OCI-LY7 (cell line): ENCODE measurements at regions of chr20 and their contacts with region 1.

Region 1: DNA sequence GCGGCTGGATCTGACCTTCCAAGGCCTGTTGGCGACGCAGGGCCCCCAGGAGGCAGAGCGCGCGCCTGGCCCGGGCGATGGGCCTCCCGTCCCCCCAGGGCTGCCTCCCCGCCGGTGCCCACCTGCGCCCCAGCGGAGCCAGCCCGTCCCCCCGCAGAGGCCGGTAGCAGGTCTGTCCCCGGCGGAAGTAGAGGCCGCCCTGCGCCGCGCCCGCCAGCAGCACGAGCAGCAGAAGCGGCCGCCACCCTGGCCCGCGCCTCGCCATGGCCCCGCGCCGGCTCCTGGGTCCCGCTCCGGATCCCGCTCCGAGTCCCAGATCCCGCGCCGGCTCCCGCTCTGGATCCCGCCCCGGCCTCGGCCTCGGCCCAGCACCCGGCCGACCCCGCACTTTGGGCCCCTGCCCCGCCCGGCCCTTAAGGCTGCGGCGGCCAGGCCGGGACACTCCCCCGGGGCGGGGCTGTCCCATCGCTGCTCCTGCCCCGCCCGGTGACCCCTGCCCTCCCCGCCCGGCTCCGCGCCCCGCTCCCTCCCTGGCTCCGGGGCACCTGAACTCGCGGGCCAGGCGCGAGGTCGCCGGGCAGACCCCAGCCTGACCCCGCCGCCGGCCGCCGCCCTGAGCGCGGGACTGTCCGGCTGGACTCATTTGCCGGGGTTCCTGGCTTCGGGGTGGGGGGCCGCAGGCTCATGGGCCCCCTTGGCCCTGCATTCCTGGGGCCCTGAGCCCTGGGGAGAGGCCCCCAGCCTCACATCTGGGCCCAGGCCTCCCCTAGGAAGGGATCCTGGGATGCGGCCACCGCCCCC is at the start of gene CTSZ:
- DNase-seq: peak; percentile 53
- H3K4me3 ChIP-seq: peak within 1 kb of the TSS; percentile 74
- H3K27ac ChIP-seq: peak within 1 kb of the TSS; percentile 85
- H3K4me1 ChIP-seq: peaks cover 70% of the 10 kb centered on the region
- CTCF ChIP-seq: no peak
- total RNA-seq, gene CTSZ: 47.2 and 50.5 TPM in 2 replicates

Region 2: GRCh38 chr20:58650776-58651558 is 356.1 kb before region 1 on chr20 and contains the start of gene STX16:
- CTCF ChIA-PET with region 1: no interaction called
- POLR2A ChIA-PET with region 1: no interaction called
- intact Hi-C with region 1: loop called (anchors 2 kb)
- DNase-seq: peak; percentile 94
- H3K4me3 ChIP-seq: peak within 1 kb of the TSS; percentile 98
- H3K27ac ChIP-seq: peak within 1 kb of the TSS; percentile 74
- H3K4me1 ChIP-seq: peaks cover 42% of the 10 kb centered on the region
- CTCF ChIP-seq: peak; percentile 88
- total RNA-seq, gene STX16: 48.2 and 50.5 TPM in 2 replicates

Region 3: GRCh38 chr20:58890518-58891085 is 116.5 kb before region 1 on chr20:
- CTCF ChIA-PET with region 1: no interaction called
- POLR2A ChIA-PET with region 1: no interaction called
- intact Hi-C with region 1: loop called (anchors 1 kb)
- DNase-seq: peak; percentile 85
- H3K4me3 ChIP-seq: peak overlapping the region; percentile 90
- H3K27ac ChIP-seq: peak overlapping the region; percentile 84
- H3K4me1 ChIP-seq: peaks cover 58% of the 10 kb centered on the region
- CTCF ChIP-seq: no peak

Region 4: DNA sequence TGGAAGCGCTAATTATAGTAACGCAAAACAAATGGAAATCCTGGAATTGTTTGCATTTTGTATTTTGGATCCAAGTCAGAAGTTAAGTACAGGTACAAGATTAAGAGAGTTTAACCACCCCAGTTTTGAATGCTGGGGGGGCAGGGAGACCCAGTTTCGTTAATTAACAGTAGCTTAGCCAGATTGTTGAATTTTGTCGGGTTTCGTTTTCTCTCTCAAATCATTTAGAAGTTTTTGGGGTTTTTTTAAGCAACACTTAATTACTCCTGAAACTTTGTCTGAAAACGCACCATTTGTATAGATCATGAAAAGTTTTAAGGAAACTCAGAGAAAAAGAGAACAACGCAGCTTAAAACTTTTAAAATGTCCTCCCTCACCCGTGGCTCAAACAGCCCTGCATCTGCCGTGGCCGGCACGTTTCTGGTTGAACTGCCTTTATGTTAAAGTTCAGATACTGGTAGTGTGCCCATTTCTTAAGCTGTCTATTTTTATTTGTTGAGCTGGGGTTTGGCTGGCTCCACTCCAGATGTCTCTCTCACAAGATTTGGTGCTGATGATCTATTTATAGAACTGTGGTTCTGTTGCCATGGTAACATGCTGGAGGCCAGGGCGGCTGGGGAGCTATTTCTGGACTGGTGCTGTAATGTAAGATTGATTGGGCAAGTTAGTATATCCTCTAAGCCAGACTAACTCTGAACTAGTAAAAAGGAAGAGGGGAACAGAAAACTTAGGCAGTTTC is 99.5 kb before region 1 on chr20:
- CTCF ChIA-PET with region 1: no interaction called
- POLR2A ChIA-PET with region 1: interaction called, 4 read pairs
- intact Hi-C with region 1: loop called (anchors 1 kb)
- DNase-seq: peak; percentile 98
- H3K4me3 ChIP-seq: peak overlapping the region; percentile 60
- H3K27ac ChIP-seq: peak overlapping the region; percentile 98
- H3K4me1 ChIP-seq: peaks cover 40% of the 10 kb centered on the region
- CTCF ChIP-seq: no peak

Region 5: GRCh38 chr20:59032023-59032712 is 25.1 kb after region 1 on chr20 and contains the start of gene ATP5F1E:
- CTCF ChIA-PET with region 1: interaction called, 3 read pairs
- POLR2A ChIA-PET with region 1: interaction called, 13 read pairs
- intact Hi-C with region 1: loop called (anchors 1 kb)
- DNase-seq: peak; percentile 97
- H3K4me3 ChIP-seq: peak within 1 kb of the TSS; percentile 76
- H3K27ac ChIP-seq: peak within 1 kb of the TSS; percentile 72
- H3K4me1 ChIP-seq: peaks cover 49% of the 10 kb centered on the region
- CTCF ChIP-seq: no peak
- total RNA-seq, gene ATP5F1E: 36.7 and 42.4 TPM in 2 replicates

Region 6: GRCh38 chr20:59159493-59160376 is 152.7 kb after region 1 on chr20:
- CTCF ChIA-PET with region 1: no interaction called
- POLR2A ChIA-PET with region 1: no interaction called
- intact Hi-C with region 1: loop called (anchors 10 kb)
- DNase-seq: peak; percentile 22
- H3K4me3 ChIP-seq: no peak overlapping the region
- H3K27ac ChIP-seq: no peak overlapping the region
- H3K4me1 ChIP-seq: peaks cover 44% of the 10 kb centered on the region
- CTCF ChIP-seq: no peak